Lower leg skin (tissue), 4 donors: ENCODE measurements at regions of chr13 and their contacts with region 1.

Region 1: DNA sequence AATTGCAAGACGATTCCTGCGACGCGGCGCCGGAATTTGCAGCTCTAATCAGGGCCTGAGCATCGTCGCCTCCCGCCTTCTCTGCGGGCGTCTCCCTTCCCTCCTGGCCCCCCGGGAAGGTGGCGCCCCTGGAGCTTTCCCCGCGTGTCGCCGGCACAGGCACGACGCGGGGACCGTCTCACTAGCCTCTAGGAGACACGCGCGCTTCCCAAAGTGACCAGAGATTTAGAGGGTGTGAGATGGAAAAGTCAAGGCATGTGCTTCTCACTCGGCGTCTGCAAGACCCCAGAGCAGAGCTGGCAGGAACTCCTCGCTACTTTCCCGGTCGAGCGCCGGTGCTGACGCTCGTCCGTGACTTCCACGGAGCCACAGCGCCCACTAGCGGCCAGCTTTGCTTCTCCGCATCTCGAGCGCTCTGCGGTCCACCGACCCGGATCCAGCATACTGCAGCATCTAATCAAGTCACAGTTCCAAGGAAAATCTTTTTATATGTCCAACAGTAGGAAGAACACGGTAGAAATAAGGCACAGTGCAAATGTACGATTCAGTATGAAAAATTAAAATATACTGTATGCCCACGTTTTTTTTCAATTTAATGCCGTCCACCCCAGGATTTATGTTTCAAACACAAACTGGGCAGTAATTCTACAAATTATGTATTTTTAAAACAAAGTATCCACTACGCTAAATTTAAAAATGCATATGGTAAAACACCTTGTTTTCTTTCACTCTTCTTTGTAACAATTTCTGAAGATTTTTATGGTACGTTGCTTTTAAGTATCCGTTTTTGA is 977 bp upstream of the EFNB2 start:
- DNase-seq: peak; percentile 76 to 97
- H3K4me3 ChIP-seq: peak overlapping the region; percentile 47
- CTCF ChIP-seq: peak in 1 of 3 donors; percentile 75
- POLR2A ChIP-seq: no peak

Region 2: GRCh38 chr13:104567114-104567513 is 1969.3 kb before region 1 on chr13:
- intact Hi-C with region 1: loop called (anchors 10 kb)
- DNase-seq: no peak
- H3K4me3 ChIP-seq: no peak overlapping the region
- CTCF ChIP-seq: no peak
- POLR2A ChIP-seq: no peak

Region 3: DNA sequence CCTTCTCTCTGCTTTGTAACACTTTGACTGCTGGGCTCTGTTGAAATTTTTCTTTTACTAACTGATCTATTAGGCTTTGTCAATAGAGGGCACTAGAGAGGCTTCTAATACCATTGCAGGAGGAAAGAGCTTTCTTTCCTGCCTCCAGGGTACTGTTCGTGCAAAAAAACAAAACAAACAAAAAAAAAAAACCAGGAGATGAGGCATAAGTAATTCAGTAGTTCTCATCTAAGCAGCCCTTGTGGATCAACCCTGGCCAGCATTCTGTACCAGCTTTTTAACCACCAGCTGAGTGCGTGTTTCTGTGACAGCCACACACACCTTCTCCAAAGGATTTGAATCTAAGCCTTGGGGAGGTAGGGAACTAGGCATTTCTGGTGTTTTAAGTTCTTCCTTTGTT is 1762.7 kb before region 1 on chr13:
- intact Hi-C with region 1: loop called (anchors 10 kb)
- DNase-seq: no peak
- H3K4me3 ChIP-seq: no peak overlapping the region
- CTCF ChIP-seq: no peak
- POLR2A ChIP-seq: no peak